GM12878 (cell line): ENCODE measurements at regions of chr20 and their contacts with region 1.

Region 1: DNA sequence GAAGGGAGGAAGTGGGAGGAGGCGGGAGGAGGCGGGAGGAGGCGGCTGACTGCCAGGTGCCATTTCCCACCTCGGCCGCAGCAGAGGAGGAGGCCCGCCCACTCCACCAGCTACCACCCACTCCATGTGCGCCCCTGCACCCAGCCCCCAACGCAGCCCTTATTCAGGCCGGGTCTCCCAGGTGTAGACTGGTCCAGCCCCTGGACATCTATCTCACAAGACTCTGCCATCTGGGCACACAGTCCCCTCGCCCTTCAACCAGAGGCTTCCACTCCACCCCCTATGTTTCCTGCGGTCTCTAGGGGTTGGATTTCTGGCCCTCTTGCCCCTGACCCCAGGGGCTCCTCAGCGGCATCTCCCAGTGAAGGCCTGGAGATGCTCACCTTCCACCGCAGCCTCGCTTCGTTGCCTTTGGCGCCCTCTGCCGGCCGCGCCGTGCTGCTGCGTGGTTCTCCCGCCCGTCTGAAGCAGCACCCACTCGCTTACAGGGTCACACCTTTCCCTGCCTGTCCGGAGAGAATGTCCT is 32.6 kb upstream of the FAM83D start:
- DNase-seq: peak; percentile 38
- ATAC-seq: peak; percentile 81
- H3K4me3 ChIP-seq: no peak overlapping the region
- H3K27ac ChIP-seq: peak overlapping the region; percentile 91
- H3K4me1 ChIP-seq: peaks cover 50% of the 10 kb centered on the region
- H3K27me3 ChIP-seq: no peaks in the 10 kb centered on the region
- CTCF ChIP-seq: peak; percentile 90 to 98 (median 95)
- EP300 ChIP-seq: no peak
- POLR2A ChIP-seq: no peak; the same call in 1 of the 2 replicates
- RAD21 ChIP-seq: peak; percentile 95

Region 2: GRCh38 chr20:38748097-38748860 is 145.3 kb before region 1 on chr20 and contains the start of gene ACTR5:
- CTCF ChIA-PET with region 1: interaction called, 86 read pairs
- POLR2A ChIA-PET with region 1: interaction called, 4 read pairs
- RAD21 ChIA-PET with region 1: interaction called, 84 read pairs
- SMC1A ChIA-PET with region 1: interaction called, 67 read pairs
- in situ Hi-C with region 1: no loop called
- intact Hi-C with region 1: loop called (anchors 1 kb)
- DNase-seq: peak; percentile 76
- ATAC-seq: peak; percentile 94
- H3K4me3 ChIP-seq: peak within 1 kb of the TSS; percentile 75
- H3K27ac ChIP-seq: peak within 1 kb of the TSS; percentile 71
- H3K4me1 ChIP-seq: peaks cover 8% of the 10 kb centered on the region; the same call in 1 of the 2 replicates
- H3K27me3 ChIP-seq: no peaks in the 10 kb centered on the region
- CTCF ChIP-seq: no peak
- EP300 ChIP-seq: no peak
- POLR2A ChIP-seq: peak; percentile 94
- RAD21 ChIP-seq: no peak
- polyA plus RNA-seq, gene ACTR5: 0.52 to 1.7 TPM

Region 3: GRCh38 chr20:38818113-38819065 is 75.2 kb before region 1 on chr20:
- CTCF ChIA-PET with region 1: interaction called, 17 read pairs
- POLR2A ChIA-PET with region 1: interaction called, 4 read pairs
- RAD21 ChIA-PET with region 1: interaction called, 11 read pairs
- SMC1A ChIA-PET with region 1: interaction called, 30 read pairs
- in situ Hi-C with region 1: no loop called
- intact Hi-C with region 1: no loop called
- DNase-seq: no peak
- ATAC-seq: peak; percentile 8; the same call in 2 of the 3 replicates
- H3K4me3 ChIP-seq: no peak overlapping the region
- H3K27ac ChIP-seq: no peak overlapping the region
- H3K4me1 ChIP-seq: peaks cover 18% of the 10 kb centered on the region
- H3K27me3 ChIP-seq: no peaks in the 10 kb centered on the region
- CTCF ChIP-seq: no peak
- EP300 ChIP-seq: no peak
- POLR2A ChIP-seq: no peak
- RAD21 ChIP-seq: no peak

Region 4: DNA sequence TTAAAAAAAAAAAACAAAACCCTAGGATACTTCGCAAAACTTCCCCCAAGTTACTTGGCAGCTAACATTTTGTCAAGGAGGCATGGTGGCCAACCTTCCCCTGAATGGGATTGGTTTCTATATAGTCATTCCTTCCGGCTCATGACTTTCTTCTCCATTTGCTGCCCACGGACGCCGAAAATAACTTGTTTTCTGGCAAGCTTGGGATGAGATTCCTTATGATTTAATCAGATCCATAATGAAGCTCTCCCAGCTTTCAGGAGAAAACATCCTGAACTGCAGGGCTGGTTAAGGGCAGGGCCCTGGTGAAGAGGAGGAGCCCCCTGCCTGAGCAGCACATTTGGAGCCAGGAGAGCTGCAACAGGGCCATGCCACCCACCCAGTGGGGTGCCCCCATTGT is 38.3 kb before region 1 on chr20:
- CTCF ChIA-PET with region 1: interaction called, 106 read pairs
- POLR2A ChIA-PET with region 1: interaction called, 27 read pairs
- RAD21 ChIA-PET with region 1: interaction called, 116 read pairs
- SMC1A ChIA-PET with region 1: interaction called, 111 read pairs
- in situ Hi-C with region 1: no loop called
- intact Hi-C with region 1: loop called (anchors 1 kb)
- DNase-seq: no peak
- ATAC-seq: no peak
- H3K4me3 ChIP-seq: no peak overlapping the region
- H3K27ac ChIP-seq: no peak overlapping the region; the same call in 1 of the 2 replicates
- H3K4me1 ChIP-seq: peaks cover 28% of the 10 kb centered on the region
- H3K27me3 ChIP-seq: no peaks in the 10 kb centered on the region
- CTCF ChIP-seq: no peak
- EP300 ChIP-seq: no peak
- POLR2A ChIP-seq: no peak
- RAD21 ChIP-seq: no peak

Region 5: GRCh38 chr20:38883081-38883980 is 10.3 kb before region 1 on chr20:
- CTCF ChIA-PET with region 1: interaction called, 183 read pairs
- POLR2A ChIA-PET with region 1: interaction called, 27 read pairs
- RAD21 ChIA-PET with region 1: interaction called, 205 read pairs
- SMC1A ChIA-PET with region 1: interaction called, 105 read pairs
- in situ Hi-C with region 1: no loop called
- intact Hi-C with region 1: no loop called
- DNase-seq: no peak
- ATAC-seq: no peak
- H3K4me3 ChIP-seq: no peak overlapping the region
- H3K27ac ChIP-seq: peak overlapping the region; percentile 19; the same call in 1 of the 2 replicates
- H3K4me1 ChIP-seq: peaks cover 34% of the 10 kb centered on the region
- H3K27me3 ChIP-seq: no peaks in the 10 kb centered on the region
- CTCF ChIP-seq: no peak
- EP300 ChIP-seq: no peak
- POLR2A ChIP-seq: 0 out of 2 replicates have a peak, but pooled peaks have one; percentile 18
- RAD21 ChIP-seq: no peak